ENCODE measurements at regions of chrX and their contacts with region 1.

Region 1: GRCh38 chrX:131763674-131764073 is 219.8 kb downstream of the OR13H1 start:
- H3K4me3 ChIP-seq: peak overlapping the region; percentile 8
- H3K27ac ChIP-seq: peak overlapping the region; percentile 38; the same call in 1 of the 2 replicates
- H3K4me1 ChIP-seq: peaks cover 4% of the 10 kb centered on the region; the same call in 1 of the 2 replicates
- CTCF ChIP-seq: peak; percentile 95

Region 2: GRCh38 chrX:131650637-131651410 is 112.8 kb before region 1 on chrX:
- CTCF ChIA-PET with region 1: no interaction called
- POLR2A ChIA-PET with region 1: no interaction called
- H3K4me3 ChIP-seq: no peak overlapping the region
- H3K27ac ChIP-seq: no peak overlapping the region
- H3K4me1 ChIP-seq: no peaks in the 10 kb centered on the region
- CTCF ChIP-seq: no peak

Region 3: DNA sequence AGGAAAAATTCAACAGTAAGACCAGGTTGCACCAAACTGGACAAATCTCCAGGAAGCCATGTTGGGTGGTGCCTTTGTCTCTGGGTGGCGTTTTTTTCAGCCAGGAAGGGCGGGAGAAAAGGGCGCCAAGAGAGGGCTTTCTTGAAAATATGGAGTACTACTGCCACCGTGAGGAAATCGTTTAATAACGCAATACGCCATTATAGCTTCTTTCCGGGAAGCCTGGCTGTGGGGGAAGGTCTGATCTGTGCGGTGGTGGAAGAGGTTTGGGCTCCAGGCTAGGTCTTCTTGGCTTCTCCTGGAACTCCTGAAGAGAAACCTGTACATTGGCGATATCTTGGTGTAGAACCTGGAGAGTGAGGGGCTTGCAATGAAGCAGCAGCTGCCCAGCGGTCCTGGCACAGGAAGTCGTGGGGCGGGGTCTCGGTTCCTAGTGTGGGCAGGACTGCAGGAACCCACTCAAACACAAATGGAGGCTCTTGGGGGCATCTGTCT is 17.2 kb before region 1 on chrX:
- CTCF ChIA-PET with region 1: interaction called, 12 read pairs
- POLR2A ChIA-PET with region 1: interaction called, 11 read pairs
- H3K4me3 ChIP-seq: peak overlapping the region; percentile 39
- H3K27ac ChIP-seq: peak overlapping the region; percentile 90
- H3K4me1 ChIP-seq: peaks cover 3% of the 10 kb centered on the region; the same call in 1 of the 2 replicates
- CTCF ChIP-seq: peak; percentile 83

Region 4: GRCh38 chrX:131778269-131779218 is 14.9 kb after region 1 on chrX:
- CTCF ChIA-PET with region 1: interaction called, 11 read pairs
- POLR2A ChIA-PET with region 1: interaction called, 3 read pairs
- H3K4me3 ChIP-seq: peak overlapping the region; percentile 29
- H3K27ac ChIP-seq: peak overlapping the region; percentile 85
- H3K4me1 ChIP-seq: 0 out of 2 replicates have a peak, but pooled peaks cover 3% of the 10 kb centered on the region
- CTCF ChIP-seq: peak; percentile 76

Region 5: DNA sequence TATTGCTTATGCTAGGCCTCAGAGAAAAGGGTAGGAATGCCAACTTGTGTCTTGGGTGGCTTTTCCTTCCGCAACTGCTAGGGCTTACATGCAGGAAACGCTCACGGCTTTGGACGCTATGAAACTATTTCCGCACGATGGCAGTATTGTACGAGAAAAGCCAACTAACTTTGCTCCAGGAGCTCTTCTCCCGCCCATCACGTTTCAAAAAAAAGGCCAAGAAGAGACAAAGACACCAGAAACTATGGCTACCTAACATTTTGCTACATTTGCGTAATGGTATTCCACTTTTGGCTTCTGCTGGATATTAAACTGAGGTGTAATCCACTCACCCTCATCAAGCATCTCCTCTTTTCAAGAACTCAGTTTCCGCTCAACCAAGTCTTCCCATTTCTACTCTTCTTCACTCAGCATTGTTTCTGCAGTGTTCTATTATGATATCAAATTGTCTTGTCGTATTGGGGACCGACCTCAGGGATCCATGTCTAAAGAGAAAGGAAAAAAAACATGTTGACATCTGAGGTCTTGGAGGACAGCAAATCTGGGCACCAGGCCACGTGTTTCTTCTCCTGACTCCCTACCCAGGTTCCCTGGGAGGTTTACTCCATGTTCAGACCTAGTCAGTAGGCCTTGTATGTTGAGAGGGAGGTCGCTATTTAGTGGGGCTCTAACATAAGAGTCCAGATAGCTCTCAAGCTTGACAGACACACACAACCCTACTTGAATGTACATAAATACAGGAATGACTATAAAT is 20.1 kb after region 1 on chrX:
- CTCF ChIA-PET with region 1: interaction called, 11 read pairs
- POLR2A ChIA-PET with region 1: interaction called, 3 read pairs
- H3K4me3 ChIP-seq: no peak overlapping the region
- H3K27ac ChIP-seq: 0 out of 2 replicates have a peak overlapping the region, but pooled peaks have one; percentile 35
- H3K4me1 ChIP-seq: 0 out of 2 replicates have a peak, but pooled peaks cover 3% of the 10 kb centered on the region
- CTCF ChIP-seq: peak; percentile 78

Measured in HEK293 (cell line).